ENCODE measurements at regions of chr10 and their contacts with region 1.

Region 1: GRCh38 chr10:12333380-12334185 is 15.8 kb upstream of the CAMK1D start:
- DNase-seq: peak; percentile 90 to 96
- H3K4me3 ChIP-seq: peak overlapping the region; percentile 46; the same call in 1 of the 2 replicates
- H3K27ac ChIP-seq: peak overlapping the region; percentile 96
- H3K4me1 ChIP-seq: peaks cover 45% of the 10 kb centered on the region
- H3K27me3 ChIP-seq: no peaks in the 10 kb centered on the region
- CTCF ChIP-seq: no peak

Region 2: GRCh38 chr10:12271210-12271540 is 62.4 kb before region 1 on chr10:
- CTCF ChIA-PET with region 1: no interaction called
- POLR2A ChIA-PET with region 1: no interaction called
- intact Hi-C with region 1: loop called (anchors 1 kb)
- DNase-seq: no peak
- H3K4me3 ChIP-seq: no peak overlapping the region
- H3K27ac ChIP-seq: peak overlapping the region; percentile 72
- H3K4me1 ChIP-seq: peaks cover 25% of the 10 kb centered on the region
- H3K27me3 ChIP-seq: no peaks in the 10 kb centered on the region
- CTCF ChIP-seq: no peak

Region 3: DNA sequence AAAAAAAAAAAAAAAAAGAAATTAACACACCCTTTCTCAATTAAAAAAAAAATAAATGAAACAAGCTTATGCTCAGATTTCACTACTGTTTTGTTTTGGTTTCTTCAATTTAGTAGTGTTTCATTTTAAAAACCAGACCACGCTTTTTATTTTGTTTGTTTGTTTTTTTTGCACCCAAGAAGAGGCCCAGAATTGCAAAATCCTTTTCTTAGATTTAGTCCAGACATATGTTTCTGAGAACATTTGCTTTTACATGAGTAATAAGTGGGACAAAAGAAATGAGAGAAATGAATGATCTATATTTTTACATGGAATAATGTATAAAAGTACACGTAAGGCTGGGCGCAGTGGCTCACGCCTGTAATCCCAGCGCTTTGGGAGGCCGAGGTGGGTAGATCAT is 18.7 kb before region 1 on chr10:
- CTCF ChIA-PET with region 1: no interaction called
- POLR2A ChIA-PET with region 1: no interaction called
- intact Hi-C with region 1: no loop called
- DNase-seq: no peak
- H3K4me3 ChIP-seq: no peak overlapping the region
- H3K27ac ChIP-seq: no peak overlapping the region
- H3K4me1 ChIP-seq: no peaks in the 10 kb centered on the region
- H3K27me3 ChIP-seq: no peaks in the 10 kb centered on the region
- CTCF ChIP-seq: no peak

Region 4: GRCh38 chr10:12348870-12349628 is 15.5 kb after region 1 on chr10 and contains the start of gene CAMK1D:
- CTCF ChIA-PET with region 1: interaction called, 9 read pairs
- POLR2A ChIA-PET with region 1: no interaction called
- intact Hi-C with region 1: loop called (anchors 1 kb)
- DNase-seq: peak; percentile 46 to 70
- H3K4me3 ChIP-seq: peak within 1 kb of the TSS; percentile 90
- H3K27ac ChIP-seq: 0 out of 2 replicates have a peak within 1 kb of the TSS, but pooled peaks have one; percentile 1
- H3K4me1 ChIP-seq: peaks cover 22% of the 10 kb centered on the region
- H3K27me3 ChIP-seq: no peaks in the 10 kb centered on the region
- CTCF ChIP-seq: no peak
- total RNA-seq, gene CAMK1D: 6.0 and 8.8 TPM in 2 replicates

Region 5: GRCh38 chr10:12720217-12720981 is 386.8 kb after region 1 on chr10:
- CTCF ChIA-PET with region 1: no interaction called
- POLR2A ChIA-PET with region 1: no interaction called
- intact Hi-C with region 1: no loop called
- DNase-seq: peak; percentile 85 to 97
- H3K4me3 ChIP-seq: peak overlapping the region; percentile 19; the same call in 1 of the 2 replicates
- H3K27ac ChIP-seq: peak overlapping the region; percentile 66
- H3K4me1 ChIP-seq: peaks cover 35% of the 10 kb centered on the region
- H3K27me3 ChIP-seq: no peaks in the 10 kb centered on the region
- CTCF ChIP-seq: no peak